Transverse colon (tissue), 4 donors: ENCODE measurements at regions of chr1 and their contacts with region 1.

Region 1: GRCh38 chr1:54273092-54273794 is 73.3 kb downstream of the MRPL37 start:
- DNase-seq: peak; percentile 61
- H3K4me3 ChIP-seq: no peak overlapping the region
- H3K27ac ChIP-seq: peak overlapping the region; percentile 88 to 94 (median 89)
- H3K4me1 ChIP-seq: peaks cover 50 to 79% (median 59%) of the 10 kb centered on the region in 4 donors
- H3K27me3 ChIP-seq: no peaks in the 10 kb centered on the region
- CTCF ChIP-seq: peak; percentile 30 to 42 (median 38)
- EP300 ChIP-seq: peak; percentile 31
- POLR2A ChIP-seq: no peak

Region 2: DNA sequence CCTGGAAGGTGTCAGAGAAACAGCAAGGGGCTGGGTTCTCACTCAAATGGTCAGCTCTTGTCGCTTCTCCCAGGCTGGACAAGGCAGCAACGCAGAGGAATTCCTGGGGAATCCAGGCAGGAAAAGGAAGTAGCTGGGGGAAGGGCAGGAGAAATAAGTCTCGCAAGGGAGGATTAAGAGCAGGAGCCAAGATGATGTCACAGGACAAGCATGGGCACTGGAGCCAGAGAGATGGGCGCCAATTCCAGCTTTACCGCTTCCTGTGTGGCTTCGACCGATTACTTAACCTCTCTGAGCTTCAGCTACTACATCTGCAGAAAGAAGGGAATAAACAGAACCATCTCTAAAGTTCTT is 62.5 kb after region 1 on chr1:
- in situ Hi-C with region 1: no loop called
- intact Hi-C with region 1: loop called (anchors 10 kb)
- DNase-seq: peak; percentile 48
- H3K4me3 ChIP-seq: no peak overlapping the region
- H3K27ac ChIP-seq: peak overlapping the region; percentile 80 to 90 (median 85)
- H3K4me1 ChIP-seq: peaks cover 23 to 69% (median 40%) of the 10 kb centered on the region in 4 donors
- H3K27me3 ChIP-seq: no peaks in the 10 kb centered on the region
- CTCF ChIP-seq: no peak
- EP300 ChIP-seq: no peak
- POLR2A ChIP-seq: no peak